Activated T-helper 2 cell treated with anti-CD3 and anti-CD28 coated beads, Interferon-gamma antibody, Interleukin-2, Interleukin-4, amounts not matched to agents 10 μg/mL and 5 μg/mL and 100 μg/mL, durations not matched to agents 14 hours and 24 hours and 36 hours (primary cell): ENCODE measurements at regions of chr10 and their contacts with region 1.

Region 1: DNA sequence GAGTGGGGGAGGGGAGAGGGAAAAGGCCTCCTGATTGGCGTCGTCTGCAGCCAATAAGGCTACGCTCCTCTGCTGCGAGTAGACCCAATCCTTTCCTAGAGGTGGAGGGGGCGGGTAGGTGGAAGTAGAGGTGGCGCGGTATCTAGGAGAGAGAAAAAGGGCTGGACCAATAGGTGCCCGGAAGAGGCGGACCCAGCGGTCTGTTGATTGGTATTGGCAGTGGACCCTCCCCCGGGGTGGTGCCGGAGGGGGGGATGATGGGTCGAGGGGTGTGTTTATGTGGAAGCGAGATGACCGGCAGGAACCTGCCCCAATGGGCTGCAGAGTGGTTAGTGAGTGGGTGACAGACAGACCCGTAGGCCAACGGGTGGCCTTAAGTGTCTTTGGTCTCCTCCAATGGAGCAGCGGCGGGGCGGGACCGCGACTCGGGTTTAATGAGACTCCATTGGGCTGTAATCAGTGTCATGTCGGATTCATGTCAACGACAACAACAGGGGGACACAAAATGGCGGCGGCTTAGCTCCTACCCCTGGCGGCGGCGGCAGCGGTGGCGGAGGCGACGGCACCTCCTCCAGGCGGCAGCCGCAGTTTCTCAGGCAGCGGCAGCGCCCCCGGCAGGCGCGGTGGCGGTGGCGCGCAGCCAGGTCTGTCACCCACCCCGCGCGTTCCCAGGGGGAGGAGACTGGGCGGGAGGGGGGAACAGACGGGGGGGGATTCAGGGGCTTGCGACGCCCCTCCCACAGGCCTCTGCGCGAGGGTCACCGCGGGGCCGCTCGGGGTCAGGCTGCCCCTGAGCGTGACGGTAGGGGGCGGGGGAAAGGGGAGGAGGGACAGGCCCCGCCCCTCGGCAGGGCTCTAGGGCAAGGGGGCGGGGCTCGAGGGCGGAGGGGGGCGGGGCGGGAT is at the start of gene KAT6B:
- DNase-seq: peak; percentile 100
- H3K4me3 Mint-ChIP-seq: peak within 1 kb of the TSS; percentile 86
- H3K27ac Mint-ChIP-seq: peak within 1 kb of the TSS; percentile 95
- H3K4me1 Mint-ChIP-seq: peaks cover 53% of the 10 kb centered on the region
- H3K27me3 Mint-ChIP-seq: no peaks in the 10 kb centered on the region
- total RNA-seq, gene KAT6B: 24.2 and 26.6 TPM in 2 replicates

Region 2: GRCh38 chr10:74262856-74263255 is 563.5 kb before region 1 on chr10:
- intact Hi-C with region 1: loop called (anchors 10 kb)
- DNase-seq: no peak
- H3K4me3 Mint-ChIP-seq: no peak overlapping the region
- H3K27ac Mint-ChIP-seq: no peak overlapping the region
- H3K4me1 Mint-ChIP-seq: peaks cover 13% of the 10 kb centered on the region
- H3K27me3 Mint-ChIP-seq: no peaks in the 10 kb centered on the region

Region 3: DNA sequence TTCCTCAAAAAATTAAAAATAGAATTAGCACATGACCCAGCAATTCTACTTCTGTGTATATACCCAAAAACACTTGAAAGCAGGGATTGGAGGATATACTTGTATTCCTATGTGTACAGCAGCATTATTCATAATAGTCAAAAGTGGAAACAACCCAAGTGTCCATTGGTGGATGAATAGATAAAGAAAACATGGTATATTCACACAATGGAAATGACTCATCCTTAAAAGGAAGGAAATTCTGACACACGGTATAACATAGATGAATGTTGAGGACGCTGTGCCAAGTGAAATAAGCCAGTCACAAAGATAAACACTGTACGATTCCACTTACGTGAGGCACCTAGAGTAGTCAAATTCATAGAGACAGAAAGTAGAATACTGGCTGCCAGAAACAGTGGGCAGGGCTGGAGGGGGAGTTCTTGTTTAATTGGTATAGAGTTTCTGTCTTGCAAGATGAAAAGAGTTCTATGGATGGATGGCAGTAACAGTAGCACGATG is 26.6 kb before region 1 on chr10:
- intact Hi-C with region 1: loop called (anchors 1 kb)
- DNase-seq: peak; percentile 12
- H3K4me3 Mint-ChIP-seq: no peak overlapping the region
- H3K27ac Mint-ChIP-seq: peak overlapping the region; percentile 68
- H3K4me1 Mint-ChIP-seq: peaks cover 14% of the 10 kb centered on the region
- H3K27me3 Mint-ChIP-seq: peaks cover 2% of the 10 kb centered on the region

Region 4: GRCh38 chr10:74842301-74842954 is 16.0 kb after region 1 on chr10:
- intact Hi-C with region 1: no loop called
- DNase-seq: no peak
- H3K4me3 Mint-ChIP-seq: no peak overlapping the region
- H3K27ac Mint-ChIP-seq: no peak overlapping the region
- H3K4me1 Mint-ChIP-seq: peaks cover 3% of the 10 kb centered on the region
- H3K27me3 Mint-ChIP-seq: no peaks in the 10 kb centered on the region

Region 5: DNA sequence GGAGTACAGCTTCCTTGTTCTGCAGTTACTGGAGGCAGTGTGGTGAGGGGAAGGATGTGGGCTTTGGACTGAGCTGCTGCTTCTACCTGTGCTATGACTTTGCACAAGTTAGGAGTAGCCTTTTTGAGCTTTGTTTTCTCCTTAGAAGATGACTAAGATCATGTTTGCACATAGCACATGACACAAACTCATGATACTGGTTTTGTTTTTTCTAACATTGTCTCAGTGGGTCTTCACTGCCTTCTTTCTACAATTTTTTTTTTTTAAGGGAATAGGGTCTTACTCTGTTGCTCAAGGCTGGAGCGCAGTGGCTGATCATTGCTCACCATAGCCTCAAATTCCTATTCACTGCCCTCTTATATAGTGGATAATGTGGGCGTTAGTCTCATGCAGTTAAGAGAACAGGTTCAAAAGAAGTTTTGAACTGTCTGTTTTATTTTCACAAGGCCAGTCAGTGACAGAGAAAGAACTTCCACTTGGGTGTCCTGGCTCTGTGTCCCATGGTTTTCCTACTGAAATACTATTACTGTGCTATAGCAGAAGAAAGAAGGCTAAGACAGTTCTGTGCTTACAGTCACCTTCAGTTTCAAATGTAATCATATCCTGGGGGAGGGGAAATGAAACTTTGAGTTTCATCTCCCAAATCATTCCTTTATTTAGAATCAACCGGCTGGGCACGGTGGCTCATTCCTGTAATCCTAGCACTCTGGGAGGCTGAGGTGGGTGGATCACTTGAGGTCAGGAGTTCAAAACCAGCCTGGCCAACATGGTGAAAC is 72.0 kb after region 1 on chr10:
- intact Hi-C with region 1: loop called (anchors 5 kb)
- DNase-seq: peak; percentile 26
- H3K4me3 Mint-ChIP-seq: no peak overlapping the region
- H3K27ac Mint-ChIP-seq: peak overlapping the region; percentile 37
- H3K4me1 Mint-ChIP-seq: peaks cover 50% of the 10 kb centered on the region
- H3K27me3 Mint-ChIP-seq: no peaks in the 10 kb centered on the region

Region 6: GRCh38 chr10:75019370-75019769 is 193.0 kb after region 1 on chr10:
- intact Hi-C with region 1: loop called (anchors 2 kb)
- DNase-seq: no peak
- H3K4me3 Mint-ChIP-seq: no peak overlapping the region
- H3K27ac Mint-ChIP-seq: no peak overlapping the region
- H3K4me1 Mint-ChIP-seq: peaks cover 26% of the 10 kb centered on the region
- H3K27me3 Mint-ChIP-seq: no peaks in the 10 kb centered on the region

Region 7: DNA sequence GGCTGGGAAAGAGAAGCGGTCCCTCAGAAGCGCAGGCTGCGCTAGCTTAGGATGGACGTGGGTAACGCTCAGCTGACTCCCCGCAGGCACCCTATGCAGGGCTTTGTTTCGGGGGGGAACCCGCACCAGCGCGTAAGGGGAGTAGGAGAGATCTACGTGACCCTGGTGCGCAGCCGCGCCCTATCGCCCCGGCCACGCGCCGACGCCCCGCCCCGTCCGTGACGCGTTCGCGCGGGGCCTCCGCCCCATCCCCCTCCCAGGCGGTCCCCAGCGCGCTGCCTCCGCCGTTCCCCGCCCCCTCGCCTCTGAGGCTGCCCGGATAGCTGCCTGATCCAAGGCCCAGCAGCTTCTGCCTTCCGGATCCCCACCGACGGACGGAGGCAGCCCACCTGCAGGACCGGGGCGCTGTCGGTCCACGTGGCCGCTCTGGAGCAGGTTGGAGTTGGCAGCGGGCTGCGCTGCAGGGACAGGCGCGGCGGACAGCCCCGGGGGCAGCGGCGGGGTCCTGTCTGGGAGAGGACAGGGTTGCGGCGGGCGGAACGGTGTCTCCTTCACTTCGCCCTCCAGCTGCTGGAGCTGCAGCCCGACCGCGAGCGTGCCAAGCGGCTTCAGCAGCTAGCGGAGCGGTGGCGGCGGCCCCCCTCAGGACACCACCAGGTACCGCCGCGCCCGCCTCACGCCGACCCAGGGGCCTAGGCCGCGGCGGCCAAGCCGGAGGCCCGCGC is 384.1 kb after region 1 on chr10 and contains the start of gene VDAC2:
- intact Hi-C with region 1: loop called (anchors 1 kb)
- DNase-seq: peak; percentile 95
- H3K4me3 Mint-ChIP-seq: peak within 1 kb of the TSS; percentile 97
- H3K27ac Mint-ChIP-seq: peak within 1 kb of the TSS; percentile 100
- H3K4me1 Mint-ChIP-seq: peaks cover 32% of the 10 kb centered on the region
- H3K27me3 Mint-ChIP-seq: no peaks in the 10 kb centered on the region
- total RNA-seq, gene VDAC2: 219 and 221 TPM in 2 replicates